ENCODE measurements at regions of chr17 and their contacts with region 1.

Region 1: GRCh38 chr17:40121181-40122135 is at the start of gene MSL1:
- DNase-seq: peak; percentile 77
- H3K4me3 ChIP-seq: peak within 1 kb of the TSS; percentile 95 to 100 (median 98)
- H3K27ac ChIP-seq: peak within 1 kb of the TSS; percentile 71
- H3K4me1 ChIP-seq: peaks cover 22% of the 10 kb centered on the region
- H3K27me3 ChIP-seq: no peaks in the 10 kb centered on the region
- CTCF ChIP-seq: no peak
- POLR2A ChIP-seq: peak; percentile 84
- total RNA-seq, gene MSL1: 90.8 and 95.0 TPM in 2 replicates

Region 2: DNA sequence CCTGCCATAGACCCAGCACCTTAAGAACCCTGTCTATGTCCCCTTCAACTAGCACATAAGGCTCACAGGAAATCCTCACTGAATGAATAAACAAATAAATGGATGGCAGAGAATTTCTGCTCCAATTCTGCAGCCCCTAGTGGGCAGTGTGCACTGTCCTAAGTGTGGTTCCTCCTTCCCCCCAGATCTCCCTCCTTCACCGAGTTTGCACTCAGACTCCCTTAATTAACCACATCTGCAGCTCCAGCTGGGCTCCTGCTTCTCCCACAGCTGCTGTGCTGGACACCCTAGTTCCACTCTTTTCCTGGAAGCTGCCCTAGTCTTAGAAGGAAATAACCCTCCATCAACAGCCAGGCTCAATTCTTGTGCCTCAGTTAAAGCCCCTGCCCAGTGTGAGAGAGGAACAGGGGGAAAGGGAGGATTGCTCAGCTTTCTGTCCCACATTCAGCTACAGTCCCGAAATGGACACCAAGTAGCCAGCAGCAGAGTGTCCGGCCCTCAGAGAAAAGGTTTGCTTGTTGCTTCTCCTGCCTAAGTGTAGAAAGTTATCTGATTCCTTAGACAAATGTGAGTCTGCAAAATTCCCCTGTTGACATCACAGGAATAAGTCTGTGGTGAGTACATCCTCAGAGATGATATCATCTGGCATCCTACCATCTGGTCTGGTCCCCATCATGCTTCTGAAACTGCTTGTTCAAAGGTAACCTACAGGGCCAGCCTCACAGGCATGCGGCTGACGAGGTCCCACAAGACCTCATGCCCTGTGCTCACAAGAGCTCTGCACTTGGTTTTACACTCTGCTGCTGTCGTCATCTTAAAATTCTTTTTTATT is 181.7 kb before region 1 on chr17:
- CTCF ChIA-PET with region 1: no interaction called
- POLR2A ChIA-PET with region 1: no interaction called
- dilution Hi-C with region 1: no loop called
- intact Hi-C with region 1: no loop called
- DNase-seq: peak; percentile 31
- H3K4me3 ChIP-seq: no peak overlapping the region
- H3K27ac ChIP-seq: no peak overlapping the region
- H3K4me1 ChIP-seq: peaks cover 5% of the 10 kb centered on the region
- H3K27me3 ChIP-seq: peaks cover 0 to 2% of the 10 kb centered on the region in 2 experiments
- CTCF ChIP-seq: peak; percentile 38 to 46
- POLR2A ChIP-seq: no peak

Region 3: GRCh38 chr17:40134184-40134583 is 12.7 kb after region 1 on chr17:
- CTCF ChIA-PET with region 1: interaction called, 13 read pairs
- POLR2A ChIA-PET with region 1: interaction called, 11 read pairs
- dilution Hi-C with region 1: no loop called
- intact Hi-C with region 1: no loop called
- DNase-seq: peak; percentile 47
- H3K4me3 ChIP-seq: peak overlapping the region in 1 of 3 experiments; percentile 2
- H3K27ac ChIP-seq: peak overlapping the region; percentile 29
- H3K4me1 ChIP-seq: peaks cover 17% of the 10 kb centered on the region
- H3K27me3 ChIP-seq: no peaks in the 10 kb centered on the region
- CTCF ChIP-seq: no peak
- POLR2A ChIP-seq: no peak

Region 4: DNA sequence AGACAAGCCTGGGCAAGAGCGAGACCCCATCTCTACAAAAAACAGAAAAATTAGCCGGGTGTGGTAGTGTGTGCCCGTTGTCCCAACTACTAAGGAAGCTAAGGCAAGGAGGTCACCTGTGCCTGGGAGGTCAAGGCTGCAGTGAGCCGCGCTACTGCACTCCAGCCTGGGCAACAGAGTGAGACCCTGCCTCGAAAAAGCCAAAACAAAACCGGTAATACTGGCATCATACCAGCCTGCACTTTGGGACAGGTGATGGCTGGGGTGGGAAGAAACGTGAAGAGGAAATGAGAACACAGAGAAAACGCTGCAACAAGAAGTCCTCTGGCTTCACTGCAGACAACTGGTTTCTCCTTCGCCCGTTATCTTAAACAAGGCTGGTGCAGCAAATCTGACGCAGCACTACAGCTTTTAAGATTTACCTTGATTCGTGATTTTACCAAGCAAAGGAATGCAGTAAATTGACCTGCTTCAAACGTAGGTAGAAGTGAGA is 18.2 kb after region 1 on chr17:
- CTCF ChIA-PET with region 1: interaction called, 13 read pairs
- POLR2A ChIA-PET with region 1: interaction called, 11 read pairs
- dilution Hi-C with region 1: no loop called
- intact Hi-C with region 1: loop called (anchors 1 kb)
- DNase-seq: no peak
- H3K4me3 ChIP-seq: peak overlapping the region; percentile 18 to 77 (median 42)
- H3K27ac ChIP-seq: peak overlapping the region; percentile 46
- H3K4me1 ChIP-seq: peaks cover 17% of the 10 kb centered on the region
- H3K27me3 ChIP-seq: no peaks in the 10 kb centered on the region
- CTCF ChIP-seq: no peak
- POLR2A ChIP-seq: no peak

Region 5: DNA sequence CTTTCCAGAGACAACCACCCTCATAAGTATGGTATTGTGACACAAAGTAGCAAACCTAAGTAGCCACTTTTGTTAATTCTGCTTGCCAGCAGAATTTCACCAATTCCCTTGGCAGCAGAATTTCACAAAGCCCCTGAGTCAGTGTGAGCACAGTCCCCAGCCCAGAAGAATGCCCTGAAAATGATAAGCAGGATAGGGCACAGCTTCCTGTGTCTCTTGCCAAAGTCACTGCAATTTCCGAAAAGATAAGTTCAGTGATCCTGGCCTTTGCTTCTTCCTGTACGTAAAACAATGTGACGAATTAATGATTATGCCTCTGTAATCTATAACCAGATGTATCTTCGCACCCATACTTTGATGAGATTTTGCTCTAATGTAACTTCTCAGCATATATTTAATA is 81.7 kb after region 1 on chr17:
- CTCF ChIA-PET with region 1: no interaction called
- POLR2A ChIA-PET with region 1: no interaction called
- dilution Hi-C with region 1: no loop called
- intact Hi-C with region 1: no loop called
- DNase-seq: peak; percentile 41
- H3K4me3 ChIP-seq: no peak overlapping the region
- H3K27ac ChIP-seq: no peak overlapping the region
- H3K4me1 ChIP-seq: peaks cover 10% of the 10 kb centered on the region
- H3K27me3 ChIP-seq: peaks cover 0 to 2% of the 10 kb centered on the region in 2 experiments
- CTCF ChIP-seq: no peak
- POLR2A ChIP-seq: no peak

Measured in endothelial cell of umbilical vein (primary cell).